Sigmoid colon (tissue), 7 donors: ENCODE measurements at regions of chr12 and their contacts with region 1.

Region 1: DNA sequence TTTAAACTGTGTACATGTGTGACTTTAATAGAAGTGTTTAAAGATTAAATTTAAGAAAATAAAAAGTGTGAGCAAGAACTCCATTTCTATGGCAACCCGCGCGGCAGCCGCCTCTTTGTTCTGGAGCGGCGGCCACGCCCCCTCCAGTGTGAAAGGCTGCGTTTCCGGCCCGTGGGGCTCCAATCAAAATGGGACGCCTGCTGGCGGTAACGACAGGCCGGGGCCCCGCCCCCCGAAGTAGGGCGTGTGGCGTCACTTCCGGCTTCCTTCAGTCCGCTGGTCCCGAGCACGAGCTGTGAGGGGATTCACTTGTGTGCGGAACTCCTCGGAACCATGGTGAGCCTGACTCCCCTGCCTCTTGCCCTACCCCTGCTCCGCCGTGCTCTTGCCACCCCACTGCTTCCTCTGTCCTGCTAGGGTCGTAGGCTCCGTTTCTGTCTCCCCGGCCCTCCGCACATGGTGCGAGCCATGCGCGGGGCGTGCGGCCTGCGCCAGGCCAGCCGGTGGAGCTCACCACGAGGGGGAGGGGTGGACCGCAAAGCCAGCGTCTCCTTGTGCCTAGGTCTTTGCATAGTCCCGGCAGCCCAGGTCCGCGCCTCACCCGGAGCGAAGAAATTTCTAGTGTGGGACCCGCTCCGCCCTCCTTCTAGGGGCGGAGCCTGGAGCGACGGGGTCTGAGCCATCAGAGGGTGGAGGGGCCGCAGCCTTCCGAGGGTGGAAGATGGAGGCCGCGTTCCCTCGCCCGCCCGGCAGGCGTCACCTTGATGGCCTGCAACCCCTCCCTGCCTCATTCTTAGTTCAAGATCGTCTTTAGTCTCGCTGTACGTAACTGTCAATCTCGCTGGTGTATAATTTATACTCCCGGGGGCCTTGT is at the start of gene CCT2:
- DNase-seq: peak; percentile 98
- H3K4me3 ChIP-seq: peak within 1 kb of the TSS; percentile 70 to 98 (median 82)
- H3K27ac ChIP-seq: peak within 1 kb of the TSS; percentile 85 to 91 (median 87)
- H3K4me1 ChIP-seq: peaks cover 0 to 12% (median 10%) of the 10 kb centered on the region in 4 donors
- H3K27me3 ChIP-seq: no peaks in the 10 kb centered on the region
- CTCF ChIP-seq: peak in 1 of 4 experiments; percentile 29
- EP300 ChIP-seq: no peak
- POLR2A ChIP-seq: peak; percentile 63 to 64
- total RNA-seq, gene CCT2: 87.0 to 126 (median 116) TPM

Region 2: GRCh38 chr12:69239352-69239921 is 346.0 kb before region 1 on chr12 and contains the start of gene CPSF6:
- intact Hi-C with region 1: loop called (anchors 10 kb)
- DNase-seq: peak; percentile 97
- H3K4me3 ChIP-seq: peak within 1 kb of the TSS; percentile 54 to 94 (median 90)
- H3K27ac ChIP-seq: peak within 1 kb of the TSS; percentile 89 to 97 (median 95)
- H3K4me1 ChIP-seq: peaks cover 0 to 49% (median 43%) of the 10 kb centered on the region in 4 donors
- H3K27me3 ChIP-seq: no peaks in the 10 kb centered on the region
- CTCF ChIP-seq: no peak
- EP300 ChIP-seq: no peak
- POLR2A ChIP-seq: peak; percentile 72 to 79
- total RNA-seq, gene CPSF6: 33.5 to 96.0 (median 34.8) TPM

Region 3: GRCh38 chr12:69738351-69739286 is 153.2 kb after region 1 on chr12 and contains the start of gene RAB3IP:
- intact Hi-C with region 1: loop called (anchors 1 kb)
- DNase-seq: peak; percentile 91
- H3K4me3 ChIP-seq: peak within 1 kb of the TSS; percentile 35 to 98 (median 72)
- H3K27ac ChIP-seq: peak within 1 kb of the TSS; percentile 33 to 68 (median 62)
- H3K4me1 ChIP-seq: peaks cover 0 to 17% (median 7%) of the 10 kb centered on the region in 4 donors
- H3K27me3 ChIP-seq: no peaks in the 10 kb centered on the region
- CTCF ChIP-seq: peak in 1 of 4 experiments; percentile 60
- EP300 ChIP-seq: no peak
- POLR2A ChIP-seq: no peak
- total RNA-seq, gene RAB3IP: 3.6 to 11.4 (median 8.3) TPM